ENCODE measurements at regions of chr16 and their contacts with region 1.

Region 1: DNA sequence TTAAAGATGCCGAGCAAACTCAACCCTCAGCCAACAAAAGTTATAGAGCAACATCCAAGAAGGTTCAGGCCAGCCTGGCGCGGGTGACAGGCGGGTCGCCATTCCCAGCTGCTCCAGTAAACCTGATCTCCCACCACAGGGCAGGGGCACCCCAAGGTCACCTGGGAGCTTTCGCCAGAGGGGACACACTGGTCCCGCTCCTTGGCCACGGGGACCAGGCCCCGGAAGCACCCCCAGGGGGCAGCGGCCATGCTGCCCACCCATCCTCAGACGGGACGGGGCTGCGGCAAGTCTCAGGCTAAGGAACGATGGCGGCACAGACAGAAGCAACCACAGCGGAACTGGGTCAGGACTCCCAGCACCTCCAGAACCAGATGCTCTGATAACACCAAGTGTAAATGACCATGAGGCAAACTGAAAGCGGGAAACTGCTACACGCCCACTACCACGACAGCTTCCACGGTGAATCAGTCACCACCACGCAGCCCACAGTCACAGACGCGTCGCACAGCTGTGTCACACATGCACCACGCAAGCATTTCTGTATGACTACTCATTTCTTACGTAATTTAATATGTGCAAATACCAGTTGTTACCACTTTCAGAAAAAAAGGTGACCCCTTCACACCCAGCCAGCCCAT is 14.1 kb upstream of the CCDC154 start:
- DNase-seq: no peak
- ATAC-seq: peak; percentile 72
- H3K4me3 Mint-ChIP-seq: peak overlapping the region; percentile 76
- H3K27ac Mint-ChIP-seq: peak overlapping the region; percentile 99
- H3K4me1 Mint-ChIP-seq: peaks cover 26% of the 10 kb centered on the region
- H3K27me3 Mint-ChIP-seq: no peaks in the 10 kb centered on the region
- CTCF ChIP-seq: no peak

Region 2: DNA sequence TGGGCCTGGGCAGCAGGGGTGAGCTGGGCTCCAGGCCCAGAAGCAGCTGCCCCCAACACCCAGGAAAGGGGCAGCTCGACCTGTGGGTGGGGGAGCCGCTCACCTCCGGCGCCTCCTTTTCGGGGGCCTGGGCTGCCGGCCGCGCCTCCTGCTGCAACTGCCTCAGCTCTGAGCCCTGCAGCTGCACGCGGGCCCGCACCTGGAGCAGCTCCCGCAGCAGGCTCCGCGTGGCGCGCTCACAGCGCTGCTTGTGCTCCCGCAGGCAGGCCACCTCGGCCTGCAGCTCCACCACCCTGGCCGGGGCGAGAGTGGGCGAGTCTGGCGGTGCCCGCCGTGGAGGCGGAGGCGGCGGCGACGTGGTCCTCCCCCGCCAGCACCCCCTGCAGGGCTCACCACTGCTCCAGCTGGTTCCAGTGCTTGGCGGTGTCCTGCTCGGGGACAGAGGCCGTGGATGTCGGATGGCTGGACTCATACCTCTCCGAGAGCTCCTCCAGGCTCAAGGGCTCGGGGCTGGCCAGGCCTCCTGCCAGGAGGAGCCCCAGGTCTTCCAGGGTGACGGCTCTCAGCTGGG is 15.0 kb before region 1 on chr16:
- CTCF ChIA-PET with region 1: no interaction called
- POLR2A ChIA-PET with region 1: interaction called, 30 read pairs
- intact Hi-C with region 1: loop called (anchors 1 kb)
- DNase-seq: no peak
- ATAC-seq: no peak
- H3K4me3 Mint-ChIP-seq: no peak overlapping the region
- H3K27ac Mint-ChIP-seq: no peak overlapping the region
- H3K4me1 Mint-ChIP-seq: peaks cover 7% of the 10 kb centered on the region
- H3K27me3 Mint-ChIP-seq: no peaks in the 10 kb centered on the region
- CTCF ChIP-seq: no peak

Region 3: DNA sequence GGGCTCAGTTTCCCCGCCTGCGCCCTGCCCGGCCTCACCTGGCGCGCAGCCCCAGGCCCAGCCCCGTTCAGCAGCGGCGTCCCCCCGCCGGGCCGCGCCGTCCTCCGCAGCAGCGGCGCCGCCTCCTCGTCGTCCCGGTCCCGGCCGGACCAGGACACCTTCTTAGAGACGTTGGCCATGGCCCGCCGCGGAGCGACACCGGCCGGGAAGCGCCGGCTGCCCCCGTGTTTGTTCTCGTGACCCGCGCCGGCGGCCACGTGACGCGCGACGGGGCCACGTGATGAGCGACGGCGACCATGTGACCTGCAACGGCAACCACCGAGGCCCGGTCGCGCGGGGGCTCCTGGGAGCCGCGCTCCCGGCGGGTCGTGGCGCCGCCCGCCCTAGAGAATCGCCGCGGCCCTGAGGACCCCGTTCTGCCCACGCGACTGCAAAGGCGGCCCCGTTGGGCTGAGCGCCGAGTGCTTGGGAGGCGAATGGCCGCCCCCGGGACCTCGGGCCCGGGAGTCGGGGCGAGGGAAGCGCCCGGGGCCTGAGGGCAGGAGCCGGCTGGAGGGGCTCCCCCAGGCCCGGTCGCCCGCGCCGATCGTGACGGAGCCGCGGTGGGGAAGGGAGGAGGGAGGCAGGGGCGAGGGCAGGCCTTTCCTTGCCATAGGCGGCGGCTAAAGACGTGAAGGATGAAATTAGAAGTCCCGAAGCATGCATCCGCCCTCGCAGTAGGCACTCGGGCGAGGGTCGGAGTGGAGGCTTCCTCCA is 16.5 kb after region 1 on chr16 and contains the start of gene CLCN7:
- CTCF ChIA-PET with region 1: no interaction called
- POLR2A ChIA-PET with region 1: interaction called, 30 read pairs
- intact Hi-C with region 1: loop called (anchors 1 kb)
- DNase-seq: peak; percentile 91
- ATAC-seq: peak; percentile 84
- H3K4me3 Mint-ChIP-seq: peak within 1 kb of the TSS; percentile 89
- H3K27ac Mint-ChIP-seq: peak within 1 kb of the TSS; percentile 92
- H3K4me1 Mint-ChIP-seq: peaks cover 63% of the 10 kb centered on the region
- H3K27me3 Mint-ChIP-seq: no peaks in the 10 kb centered on the region
- CTCF ChIP-seq: no peak
- total RNA-seq, gene CLCN7: 127 and 144 TPM in 2 replicates